Naive thymus-derived CD8-positive, alpha-beta T cell (primary cell): ENCODE measurements at regions of chrX and their contacts with region 1.

Region 1: DNA sequence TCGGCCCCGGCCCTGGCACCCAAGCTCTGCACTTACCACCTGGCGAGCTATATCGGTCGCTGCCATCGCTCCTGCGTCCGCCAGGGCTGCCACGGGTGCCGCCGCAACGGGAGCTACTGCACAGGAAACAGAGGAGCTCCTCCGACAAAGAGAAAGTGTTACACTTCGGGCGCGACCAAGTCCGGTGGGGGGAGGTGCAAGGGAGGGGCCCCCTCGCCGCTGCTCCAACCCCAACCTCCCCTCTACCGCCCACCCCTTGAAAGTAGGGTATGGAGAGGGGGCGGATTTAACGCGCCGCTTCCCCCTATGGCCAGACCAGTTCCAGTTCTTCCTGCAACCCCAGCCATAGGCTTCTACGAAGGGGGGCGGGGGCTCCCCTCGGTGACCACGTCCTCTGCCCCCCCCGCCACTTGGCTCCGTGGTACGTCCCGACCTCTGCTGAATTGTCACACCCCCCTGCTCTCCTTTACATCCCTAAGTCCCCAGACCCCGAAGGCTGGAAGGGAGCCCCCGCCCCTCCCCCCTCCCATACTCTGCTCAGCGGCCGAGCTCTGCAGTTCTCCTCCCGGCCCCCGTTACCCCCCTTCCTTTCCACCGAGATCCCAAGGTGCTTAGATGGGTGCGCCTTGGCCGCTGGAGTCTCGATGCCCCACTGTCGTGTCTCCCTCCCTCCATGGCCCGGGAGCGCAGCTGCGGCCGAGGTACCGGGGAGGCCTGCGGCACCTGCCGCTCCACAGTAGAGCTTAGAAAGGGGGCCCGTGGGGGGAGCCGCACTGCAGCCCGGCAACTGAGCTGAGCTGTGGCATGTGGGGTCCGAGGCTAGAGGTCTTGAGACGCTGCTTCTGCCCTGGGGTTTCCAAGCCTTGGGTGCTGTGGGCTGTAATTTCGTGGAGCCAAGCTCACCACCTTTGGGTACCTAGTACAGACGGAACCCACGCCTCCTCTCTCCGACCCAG is at the start of gene SEPTIN6:
- DNase-seq: peak; percentile 65 to 95 (median 84)
- ATAC-seq: peak; percentile 67 to 68
- H3K4me3 Mint-ChIP-seq: peak within 1 kb of the TSS; percentile 93 to 100 (median 98)
- H3K27ac Mint-ChIP-seq: peak within 1 kb of the TSS; percentile 92 to 100 (median 98)
- H3K4me1 Mint-ChIP-seq: peaks cover 6 to 23% (median 19%) of the 10 kb centered on the region in 4 donors
- H3K27me3 Mint-ChIP-seq: no peaks in the 10 kb centered on the region
- polyA plus RNA-seq, gene SEPTIN6: 161 to 269 (median 226) TPM

Region 2: DNA sequence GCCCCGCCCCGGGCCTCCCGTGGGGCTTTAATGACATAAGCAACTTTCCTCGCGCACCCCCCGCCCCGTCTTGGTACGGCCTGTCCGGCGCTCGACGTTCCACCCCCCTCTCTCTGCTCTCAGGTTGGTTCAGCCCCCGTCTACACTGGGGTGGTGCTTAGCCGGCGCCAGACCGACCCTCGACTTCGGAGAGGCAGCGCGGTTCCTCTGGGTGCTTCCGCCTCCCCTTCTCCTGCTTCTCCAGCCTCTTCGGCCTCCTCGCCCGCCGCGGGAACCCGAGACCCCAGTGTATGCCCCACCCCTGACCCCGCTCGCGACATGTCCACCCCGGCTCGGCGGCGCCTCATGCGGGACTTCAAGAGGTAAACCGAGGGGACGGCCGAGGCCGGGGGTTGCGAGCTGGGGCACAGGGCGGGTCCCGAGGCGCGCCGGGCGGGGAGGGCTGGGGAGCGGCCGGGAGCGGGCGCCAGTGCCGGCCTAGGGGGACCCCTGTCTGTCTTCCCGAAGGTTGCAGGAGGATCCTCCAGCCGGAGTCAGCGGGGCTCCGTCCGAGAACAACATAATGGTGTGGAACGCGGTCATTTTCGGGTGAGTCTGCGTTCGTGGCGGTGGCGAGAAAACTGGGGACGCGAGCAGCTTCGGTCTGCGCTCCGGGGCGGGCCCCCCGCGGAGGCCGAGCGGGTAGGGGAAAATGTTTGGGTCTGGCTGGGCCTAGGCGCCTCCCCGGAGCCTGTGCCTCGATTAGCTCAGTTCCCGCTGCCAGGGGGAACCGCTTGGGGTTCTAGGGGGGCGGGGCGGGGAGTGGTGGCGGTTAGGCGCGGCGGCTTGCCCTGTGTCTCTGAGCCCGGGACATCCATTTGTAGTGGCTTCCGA is 118.7 kb before region 1 on chrX and contains the start of gene UBE2A:
- POLR2A ChIA-PET with region 1: interaction called, 12 read pairs
- DNase-seq: peak; percentile 79 to 95 (median 86)
- ATAC-seq: peak; percentile 89 to 92
- H3K4me3 Mint-ChIP-seq: peak within 1 kb of the TSS; percentile 80 to 94 (median 88)
- H3K27ac Mint-ChIP-seq: peak within 1 kb of the TSS; percentile 77 to 97 (median 89)
- H3K4me1 Mint-ChIP-seq: peaks cover 4 to 31% (median 16%) of the 10 kb centered on the region in 4 donors
- H3K27me3 Mint-ChIP-seq: no peaks in the 10 kb centered on the region
- polyA plus RNA-seq, gene UBE2A: 31.5 to 43.5 (median 34.0) TPM

Region 3: DNA sequence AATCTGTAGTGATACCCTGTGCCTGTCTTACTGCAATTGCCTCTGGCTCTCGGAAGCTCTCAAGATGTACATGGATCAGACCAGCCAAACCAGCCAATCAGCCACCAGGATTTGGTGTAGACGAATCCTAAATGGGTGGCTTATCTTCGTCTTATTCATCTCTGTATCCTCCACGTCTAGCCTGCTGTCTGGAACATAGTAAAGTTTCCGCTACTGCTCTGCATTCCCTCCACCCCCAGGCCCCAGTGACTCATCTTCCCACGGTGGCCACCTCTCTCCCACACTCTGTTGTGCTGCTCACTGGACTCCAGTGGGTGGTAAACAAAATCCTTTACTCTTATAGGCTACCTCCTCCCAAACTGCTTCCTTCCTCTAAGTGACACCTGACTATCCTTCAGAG is 38.2 kb before region 1 on chrX:
- POLR2A ChIA-PET with region 1: interaction called, 12 read pairs
- DNase-seq: peak in 3 of 10 donors; percentile 19 to 50 (median 39)
- ATAC-seq: peak in 1 of 2 donors; percentile 57
- H3K4me3 Mint-ChIP-seq: peak overlapping the region in 8 of 10 donors; percentile 7 to 78 (median 47)
- H3K27ac Mint-ChIP-seq: peak overlapping the region; percentile 39 to 94 (median 88)
- H3K4me1 Mint-ChIP-seq: peaks cover 18 to 37% (median 30%) of the 10 kb centered on the region in 4 donors
- H3K27me3 Mint-ChIP-seq: no peaks in the 10 kb centered on the region

Region 4: DNA sequence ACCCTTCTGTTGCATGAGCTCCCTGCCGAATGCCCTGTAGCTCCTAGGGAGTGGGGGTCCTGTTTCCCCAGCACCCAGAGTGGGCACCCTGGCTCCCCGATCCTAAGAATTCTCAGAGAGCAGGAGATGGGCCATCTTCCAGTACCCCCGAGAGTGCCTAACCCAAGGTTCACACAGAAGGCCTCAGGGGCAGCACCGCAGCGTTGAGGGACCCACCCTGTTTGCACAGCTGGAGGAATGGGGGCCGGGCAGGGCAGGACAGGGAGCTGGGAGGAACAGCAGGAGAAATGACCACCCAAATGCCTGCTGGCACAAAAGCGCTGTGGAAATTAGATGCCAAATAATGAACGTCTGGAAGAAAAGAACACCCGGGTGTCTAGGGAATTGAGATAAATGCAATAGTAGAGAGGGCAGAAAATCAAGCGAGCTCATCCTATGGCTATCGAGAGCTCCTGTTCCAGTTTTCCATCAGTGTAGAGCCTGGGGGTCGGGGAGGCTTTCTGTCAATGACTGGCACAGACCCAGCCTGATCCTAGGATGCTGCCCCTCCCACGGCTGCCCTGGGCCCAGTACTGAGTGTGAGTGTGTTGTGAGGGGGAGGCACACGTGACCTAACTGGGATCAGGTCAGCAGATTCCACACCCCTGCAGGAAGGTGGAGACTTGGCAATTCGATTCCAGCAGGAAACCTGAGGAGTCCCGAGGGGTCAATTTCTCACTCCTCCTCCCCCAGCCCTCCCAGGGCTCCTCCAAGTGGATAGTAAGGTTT is 26.0 kb before region 1 on chrX:
- POLR2A ChIA-PET with region 1: interaction called, 309 read pairs
- DNase-seq: no peak
- ATAC-seq: no peak
- H3K4me3 Mint-ChIP-seq: no peak overlapping the region
- H3K27ac Mint-ChIP-seq: peak overlapping the region in 9 of 10 donors; percentile 7 to 86 (median 56)
- H3K4me1 Mint-ChIP-seq: peaks cover 12 to 47% (median 33%) of the 10 kb centered on the region in 4 donors
- H3K27me3 Mint-ChIP-seq: no peaks in the 10 kb centered on the region

Region 5: GRCh38 chrX:119726900-119727555 is 33.7 kb after region 1 on chrX:
- POLR2A ChIA-PET with region 1: interaction called, 14 read pairs
- DNase-seq: peak in 6 of 10 donors; percentile 2 to 62 (median 36)
- ATAC-seq: peak; percentile 92 to 93
- H3K4me3 Mint-ChIP-seq: peak overlapping the region in 9 of 10 donors; percentile 43 to 73 (median 64)
- H3K27ac Mint-ChIP-seq: peak overlapping the region in 9 of 10 donors; percentile 4 to 87 (median 78)
- H3K4me1 Mint-ChIP-seq: peaks cover 6 to 11% (median 8%) of the 10 kb centered on the region in 4 donors
- H3K27me3 Mint-ChIP-seq: no peaks in the 10 kb centered on the region

Region 6: GRCh38 chrX:119757979-119758730 is 64.8 kb after region 1 on chrX and contains the start of gene SOWAHD:
- POLR2A ChIA-PET with region 1: interaction called, 18 read pairs
- DNase-seq: peak in 7 of 10 donors; percentile 22 to 47 (median 32)
- ATAC-seq: peak; percentile 28 to 45
- H3K4me3 Mint-ChIP-seq: peak within 1 kb of the TSS; percentile 62 to 90 (median 80)
- H3K27ac Mint-ChIP-seq: peak within 1 kb of the TSS; percentile 95 to 98 (median 96)
- H3K4me1 Mint-ChIP-seq: peaks cover 20 to 58% (median 52%) of the 10 kb centered on the region in 4 donors
- H3K27me3 Mint-ChIP-seq: no peaks in the 10 kb centered on the region
- polyA plus RNA-seq, gene SOWAHD: 0.43 to 1.1 (median 0.47) TPM